CD4-positive, alpha-beta memory T cell (primary cell): ENCODE measurements at regions of chr5 and their contacts with region 1.

Region 1: GRCh38 chr5:153974131-153974812 is 64.4 kb downstream of the FAM114A2 start:
- DNase-seq: peak; percentile 28 to 41 (median 39)
- H3K4me3 ChIP-seq: no peak overlapping the region
- H3K4me3 Mint-ChIP-seq: no peak overlapping the region
- H3K27ac ChIP-seq: no peak overlapping the region
- H3K27ac Mint-ChIP-seq: no peak overlapping the region
- H3K4me1 ChIP-seq: no peaks in the 10 kb centered on the region
- H3K4me1 Mint-ChIP-seq: no peaks in the 10 kb centered on the region
- H3K27me3 ChIP-seq: no peaks in the 10 kb centered on the region
- H3K27me3 Mint-ChIP-seq: peaks cover 3 to 4% of the 10 kb centered on the region in 2 donors

Region 2: GRCh38 chr5:154179846-154180710 is 205.8 kb after region 1 on chr5:
- CTCF ChIA-PET with region 1: interaction called, 14 read pairs
- POLR2A ChIA-PET with region 1: no interaction called
- intact Hi-C with region 1: no loop called
- DNase-seq: peak in 4 of 5 donors; percentile 37 to 52 (median 42)
- H3K4me3 ChIP-seq: no peak overlapping the region
- H3K4me3 Mint-ChIP-seq: no peak overlapping the region
- H3K27ac ChIP-seq: no peak overlapping the region
- H3K27ac Mint-ChIP-seq: no peak overlapping the region
- H3K4me1 ChIP-seq: no peaks in the 10 kb centered on the region
- H3K4me1 Mint-ChIP-seq: peaks cover 0 to 4% (median 2%) of the 10 kb centered on the region in 4 donors
- H3K27me3 ChIP-seq: no peaks in the 10 kb centered on the region
- H3K27me3 Mint-ChIP-seq: peaks cover 2 to 4% of the 10 kb centered on the region in 2 donors